ENCODE measurements at regions of chr10 and their contacts with region 1.

Region 1: GRCh38 chr10:69092959-69093850 is 5.3 kb downstream of the SRGN start:
- DNase-seq: no peak
- H3K4me3 ChIP-seq: no peak overlapping the region
- CTCF ChIP-seq: peak; percentile 57

Region 2: DNA sequence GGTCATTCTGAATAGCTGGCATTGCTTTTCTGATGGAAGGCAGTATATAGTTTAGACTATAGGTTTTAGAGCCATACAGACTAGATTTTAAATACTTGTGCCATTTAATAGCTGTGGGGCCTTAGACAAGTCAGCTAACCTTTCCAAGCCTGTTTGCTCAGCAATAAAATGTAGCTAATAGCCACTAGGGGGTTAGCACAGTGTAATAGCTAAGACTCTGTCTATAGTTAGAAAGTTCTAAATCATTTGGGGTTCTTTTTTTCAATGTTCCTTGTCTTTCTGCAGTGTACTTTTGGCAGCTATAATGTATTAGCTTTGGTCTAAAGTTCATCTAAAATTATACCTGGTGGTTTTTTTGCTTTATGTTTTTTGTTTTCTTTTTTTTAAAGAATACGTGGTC is 112.1 kb before region 1 on chr10:
- CTCF ChIA-PET with region 1: interaction called, 20 read pairs
- POLR2A ChIA-PET with region 1: no interaction called
- DNase-seq: no peak
- H3K4me3 ChIP-seq: no peak overlapping the region
- CTCF ChIP-seq: no peak

Region 3: DNA sequence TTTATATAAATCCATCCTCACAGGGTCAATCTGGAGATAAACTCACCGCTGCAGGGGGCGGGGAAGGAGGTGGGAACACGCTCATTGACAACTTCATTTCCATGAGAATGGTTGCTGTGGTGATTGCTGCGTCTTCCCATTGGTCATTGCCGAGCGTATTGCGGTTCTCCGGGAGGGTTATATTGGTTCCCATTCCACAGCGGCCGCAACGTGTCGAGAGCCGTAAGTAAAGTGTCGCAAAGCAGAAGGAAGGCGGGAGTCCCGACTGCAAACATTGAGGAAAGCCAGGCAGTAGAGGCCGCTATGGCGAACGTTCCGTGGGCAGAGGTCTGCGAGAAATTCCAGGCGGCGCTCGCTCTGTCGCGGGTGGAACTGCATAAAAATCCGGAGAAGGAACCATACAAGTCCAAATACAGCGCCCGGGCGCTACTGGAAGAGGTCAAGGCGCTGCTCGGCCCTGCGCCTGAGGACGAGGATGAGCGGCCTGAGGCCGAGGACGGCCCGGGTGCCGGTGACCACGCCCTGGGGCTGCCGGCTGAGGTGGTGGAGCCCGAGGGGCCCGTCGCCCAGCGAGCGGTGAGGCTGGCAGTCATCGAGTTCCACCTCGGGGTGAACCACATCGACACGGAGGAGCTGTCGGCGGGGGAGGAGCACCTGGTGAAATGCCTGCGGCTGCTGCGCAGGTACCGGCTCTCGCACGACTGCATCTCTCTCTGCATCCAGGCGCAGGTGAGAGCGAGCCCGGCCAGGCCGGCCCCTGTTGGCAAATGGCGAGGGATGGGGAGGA is 104.5 kb before region 1 on chr10 and contains the start of gene KIFBP:
- CTCF ChIA-PET with region 1: interaction called, 20 read pairs
- POLR2A ChIA-PET with region 1: no interaction called
- DNase-seq: peak; percentile 91
- H3K4me3 ChIP-seq: peak within 1 kb of the TSS; percentile 90
- CTCF ChIP-seq: peak; percentile 68

Region 4: DNA sequence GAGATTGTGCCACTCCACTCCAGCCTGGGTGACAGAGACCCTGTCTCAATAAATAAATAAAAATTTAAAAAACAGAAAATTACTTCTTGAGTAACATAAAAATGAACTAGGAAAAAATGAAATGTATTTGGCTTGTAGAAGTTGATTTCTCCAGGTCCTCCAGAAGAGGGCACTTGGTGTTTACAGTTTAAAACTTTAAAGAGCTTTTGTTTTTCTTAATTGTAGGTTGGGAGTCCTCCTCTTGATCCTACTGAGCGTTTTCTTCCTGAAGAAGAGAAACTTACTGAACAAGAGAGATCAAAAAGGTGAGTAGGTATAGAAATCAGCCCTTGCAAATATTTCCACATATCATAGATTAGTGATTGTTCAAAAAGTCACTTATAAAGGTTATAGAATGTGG is 88.4 kb before region 1 on chr10:
- CTCF ChIA-PET with region 1: interaction called, 416 read pairs
- POLR2A ChIA-PET with region 1: no interaction called
- DNase-seq: no peak
- H3K4me3 ChIP-seq: no peak overlapping the region
- CTCF ChIP-seq: peak; percentile 43

Region 5: DNA sequence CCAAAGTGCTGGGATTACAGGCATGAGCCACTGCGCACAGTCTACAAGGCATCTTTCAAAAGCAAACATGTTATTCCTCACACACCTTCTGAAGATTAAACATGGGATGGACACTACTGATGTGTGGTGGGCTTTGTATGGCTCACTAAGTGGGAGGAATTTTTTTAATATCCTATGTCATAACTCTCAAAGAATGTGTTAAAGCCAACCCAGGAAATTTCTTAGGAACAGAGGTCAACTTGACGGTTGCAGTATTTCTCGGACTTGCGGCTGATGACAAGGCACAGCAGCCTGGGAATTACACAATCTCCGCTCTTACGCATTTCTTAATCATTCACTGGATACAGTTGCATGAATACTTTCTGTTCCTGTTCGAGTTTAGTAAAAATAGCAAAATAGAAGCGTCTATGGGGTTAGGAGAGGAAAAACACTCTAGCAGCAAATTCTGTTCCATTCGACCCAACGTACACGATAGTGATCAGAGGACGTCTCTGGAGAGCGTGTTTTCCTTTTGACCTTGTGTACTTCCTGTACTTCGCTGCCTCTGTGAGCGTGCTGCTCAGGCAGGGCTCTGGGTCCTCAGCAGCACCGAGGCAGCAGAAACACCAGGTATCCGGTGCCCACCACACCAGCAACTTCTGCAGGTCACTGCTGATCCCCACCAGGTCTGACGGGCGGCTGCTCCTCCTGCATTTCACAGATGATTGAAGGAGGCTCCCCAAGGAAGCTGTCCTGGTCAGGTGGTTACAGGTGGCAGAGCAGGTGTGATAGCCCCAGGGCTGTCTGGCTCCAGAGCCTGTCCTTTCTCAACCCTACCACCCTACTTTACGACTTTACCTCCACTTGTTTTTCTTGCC is 31.7 kb before region 1 on chr10:
- CTCF ChIA-PET with region 1: interaction called, 28 read pairs
- POLR2A ChIA-PET with region 1: no interaction called
- DNase-seq: peak; percentile 92
- H3K4me3 ChIP-seq: peak overlapping the region; percentile 49
- CTCF ChIP-seq: no peak

Region 6: GRCh38 chr10:69107699-69108098 is 14.5 kb after region 1 on chr10:
- CTCF ChIA-PET with region 1: interaction called, 40 read pairs
- POLR2A ChIA-PET with region 1: no interaction called
- DNase-seq: no peak
- H3K4me3 ChIP-seq: no peak overlapping the region
- CTCF ChIP-seq: no peak

Region 7: DNA sequence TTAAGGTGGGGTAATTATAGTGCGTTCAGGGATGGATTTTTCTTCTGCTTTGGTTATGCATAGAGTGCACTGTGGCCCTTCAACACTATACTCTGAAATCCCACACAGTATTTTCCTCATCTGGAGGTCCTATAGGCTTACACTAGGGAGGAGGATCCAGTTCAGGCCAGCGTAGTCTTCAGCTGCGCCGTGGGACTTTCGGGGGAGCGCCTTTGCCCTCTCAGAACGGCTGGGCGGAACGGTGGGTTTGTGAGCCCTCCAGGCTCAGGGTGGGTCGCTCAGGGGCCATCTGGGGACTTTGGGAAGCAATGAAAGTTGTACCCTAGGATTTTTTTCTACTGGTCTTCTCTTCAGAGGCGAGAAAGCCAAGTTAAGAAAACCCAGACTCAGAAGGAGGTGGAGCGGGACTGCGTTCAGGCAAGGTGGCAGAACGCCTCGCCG is 30.1 kb after region 1 on chr10:
- CTCF ChIA-PET with region 1: interaction called, 10 read pairs
- POLR2A ChIA-PET with region 1: no interaction called
- DNase-seq: no peak
- H3K4me3 ChIP-seq: peak overlapping the region; percentile 85
- CTCF ChIP-seq: no peak

Measured in AG04449 (cell line).